ENCODE measurements at regions of chr9 and their contacts with region 1.

Region 1: GRCh38 chr9:127916665-127917613 is at the start of gene ST6GALNAC4:
- DNase-seq: peak; percentile 90 to 98 (median 95)
- ATAC-seq: peak; percentile 94
- H3K4me3 ChIP-seq: peak within 1 kb of the TSS; percentile 70 to 89
- H3K4me3 Mint-ChIP-seq: peak within 1 kb of the TSS; percentile 89
- H3K27ac ChIP-seq: peak within 1 kb of the TSS; percentile 62 to 72
- H3K27ac Mint-ChIP-seq: peak within 1 kb of the TSS; percentile 92
- H3K4me1 ChIP-seq: peaks cover 46% of the 10 kb centered on the region
- H3K4me1 Mint-ChIP-seq: peaks cover 54% of the 10 kb centered on the region
- H3K27me3 ChIP-seq: peaks cover 0 to 3% of the 10 kb centered on the region in 2 experiments
- H3K27me3 Mint-ChIP-seq: no peaks in the 10 kb centered on the region
- CTCF ChIP-seq: no peak
- total RNA-seq, gene ST6GALNAC4: 40.0 to 47.6 TPM

Region 2: GRCh38 chr9:127214421-127215267 is 702.3 kb before region 1 on chr9:
- CTCF ChIA-PET with region 1: interaction called, 8 read pairs
- POLR2A ChIA-PET with region 1: no interaction called
- intact Hi-C with region 1: loop called in 1 of 2 experiments (anchors 1 kb)
- DNase-seq: peak; percentile 36 to 73 (median 64)
- ATAC-seq: peak; percentile 93
- H3K4me3 ChIP-seq: no peak overlapping the region
- H3K4me3 Mint-ChIP-seq: no peak overlapping the region
- H3K27ac ChIP-seq: no peak overlapping the region
- H3K27ac Mint-ChIP-seq: no peak overlapping the region
- H3K4me1 ChIP-seq: no peaks in the 10 kb centered on the region
- H3K4me1 Mint-ChIP-seq: peaks cover 3% of the 10 kb centered on the region
- H3K27me3 ChIP-seq: no peaks in the 10 kb centered on the region
- H3K27me3 Mint-ChIP-seq: peaks cover 8% of the 10 kb centered on the region
- CTCF ChIP-seq: peak; percentile 69

Region 3: DNA sequence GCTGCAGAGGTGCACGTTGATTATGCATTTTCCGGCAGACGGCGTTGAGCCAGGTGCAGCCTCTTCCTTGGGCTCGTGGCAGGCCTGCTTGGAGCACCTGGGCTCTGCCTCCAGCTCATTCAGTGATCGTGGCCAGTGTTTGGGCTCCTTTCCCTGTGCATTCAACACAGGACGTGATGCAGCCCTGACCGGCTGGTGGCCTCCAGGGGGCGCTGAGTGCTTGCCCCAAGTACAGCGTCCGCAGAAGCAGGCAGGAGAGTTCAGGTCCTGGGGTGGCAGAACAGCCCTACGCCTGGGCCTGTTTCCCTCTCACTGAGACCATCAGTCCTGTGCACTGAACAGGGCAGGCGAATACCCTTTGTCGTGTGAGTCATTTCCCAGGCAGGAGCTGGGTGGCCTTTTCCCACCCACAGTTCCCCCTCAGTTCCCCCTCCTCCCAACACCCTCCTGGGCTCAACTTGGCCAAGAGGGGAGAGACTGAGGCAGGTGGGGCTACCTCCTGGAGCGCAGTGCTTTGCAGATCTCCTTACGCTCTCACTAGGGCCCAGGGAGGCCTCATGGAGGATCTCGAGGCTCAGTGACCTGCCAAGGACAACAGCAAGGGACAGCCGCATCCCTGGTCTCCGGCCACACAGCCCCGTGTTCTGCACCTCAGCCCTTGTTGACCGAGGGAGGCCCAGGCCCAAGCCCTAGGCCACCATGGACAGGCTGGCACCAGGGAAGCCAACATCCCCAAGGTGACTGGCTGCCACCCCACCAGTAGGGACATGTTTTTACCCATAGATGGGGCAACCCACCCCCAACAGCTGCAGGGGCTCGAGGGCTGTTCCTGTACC is 412.8 kb before region 1 on chr9:
- CTCF ChIA-PET with region 1: interaction called, 20 read pairs
- POLR2A ChIA-PET with region 1: no interaction called
- intact Hi-C with region 1: loop called (anchors 1 to 5 kb)
- DNase-seq: peak; percentile 57 to 89 (median 82)
- ATAC-seq: peak; percentile 93
- H3K4me3 ChIP-seq: no peak overlapping the region
- H3K4me3 Mint-ChIP-seq: no peak overlapping the region
- H3K27ac ChIP-seq: no peak overlapping the region
- H3K27ac Mint-ChIP-seq: no peak overlapping the region
- H3K4me1 ChIP-seq: no peaks in the 10 kb centered on the region
- H3K4me1 Mint-ChIP-seq: no peaks in the 10 kb centered on the region
- H3K27me3 ChIP-seq: no peaks in the 10 kb centered on the region
- H3K27me3 Mint-ChIP-seq: no peaks in the 10 kb centered on the region
- CTCF ChIP-seq: peak; percentile 66

Region 4: GRCh38 chr9:127715394-127716337 is 201.3 kb before region 1 on chr9 and contains the starts of genes PTRH1 and TTC16:
- CTCF ChIA-PET with region 1: interaction called, 3 read pairs
- POLR2A ChIA-PET with region 1: no interaction called
- intact Hi-C with region 1: loop called in 1 of 2 experiments (anchors 1 kb)
- DNase-seq: peak; percentile 88 to 98 (median 97)
- ATAC-seq: peak; percentile 93
- H3K4me3 ChIP-seq: peak within 1 kb of the TSS; percentile 88 to 96
- H3K4me3 Mint-ChIP-seq: peak within 1 kb of the TSS; percentile 98
- H3K27ac ChIP-seq: peak within 1 kb of the TSS; percentile 80 to 83
- H3K27ac Mint-ChIP-seq: peak within 1 kb of the TSS; percentile 96
- H3K4me1 ChIP-seq: peaks cover 47% of the 10 kb centered on the region
- H3K4me1 Mint-ChIP-seq: peaks cover 44% of the 10 kb centered on the region
- H3K27me3 ChIP-seq: no peaks in the 10 kb centered on the region
- H3K27me3 Mint-ChIP-seq: no peaks in the 10 kb centered on the region
- CTCF ChIP-seq: no peak
- total RNA-seq, gene PTRH1: 4.6 to 5.3 TPM
- total RNA-seq, gene TTC16: 5.2 to 5.5 TPM

Region 5: DNA sequence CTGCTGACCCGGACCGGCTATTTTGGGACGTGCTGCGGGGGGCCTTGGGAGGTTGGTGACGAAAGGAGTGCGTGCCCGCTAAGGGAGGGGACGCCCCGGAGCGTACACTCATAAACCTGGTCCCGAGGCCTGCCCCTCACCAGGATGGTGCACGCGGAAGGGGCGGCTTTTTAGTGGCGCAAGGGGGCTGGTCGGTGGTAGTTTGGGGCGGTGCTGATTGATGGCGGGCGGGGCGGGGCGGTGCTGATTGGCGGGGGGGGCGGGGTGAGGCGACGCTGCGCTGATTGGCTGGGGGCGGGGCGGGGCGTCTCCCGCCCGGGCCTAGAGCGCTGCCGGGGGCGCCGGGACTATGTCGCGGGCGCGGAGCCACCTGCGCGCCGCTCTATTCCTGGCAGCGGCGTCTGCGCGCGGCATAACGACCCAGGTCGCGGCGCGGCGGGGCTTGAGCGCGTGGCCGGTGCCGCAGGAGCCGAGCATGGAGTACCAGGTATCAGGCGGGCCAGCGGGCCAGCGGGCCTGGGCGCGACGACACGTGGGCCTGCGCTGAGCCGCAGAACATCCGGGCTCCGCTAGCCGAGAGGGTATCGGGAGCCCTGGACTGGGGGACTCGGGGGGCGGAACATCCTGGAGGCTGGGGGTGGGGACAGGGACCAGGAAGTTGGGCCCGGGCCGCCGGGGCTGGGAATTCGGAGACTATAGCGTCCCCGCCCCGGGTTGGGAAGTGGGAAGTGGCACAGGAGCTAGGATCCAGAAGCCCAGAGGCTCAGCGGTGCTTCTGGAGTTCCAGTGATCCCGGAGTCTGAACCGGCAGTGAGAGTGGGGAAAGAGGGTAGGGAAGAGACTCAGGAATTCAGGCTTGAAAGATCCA is 114.1 kb before region 1 on chr9 and contains the start of gene FPGS:
- CTCF ChIA-PET with region 1: interaction called, 4 read pairs
- POLR2A ChIA-PET with region 1: no interaction called
- intact Hi-C with region 1: loop called (anchors 1 to 2 kb)
- DNase-seq: peak; percentile 57 to 92 (median 81)
- ATAC-seq: peak; percentile 87
- H3K4me3 ChIP-seq: peak within 1 kb of the TSS; percentile 95 to 98
- H3K4me3 Mint-ChIP-seq: peak within 1 kb of the TSS; percentile 92
- H3K27ac ChIP-seq: peak within 1 kb of the TSS; percentile 89
- H3K27ac Mint-ChIP-seq: peak within 1 kb of the TSS; percentile 87
- H3K4me1 ChIP-seq: peaks cover 21% of the 10 kb centered on the region
- H3K4me1 Mint-ChIP-seq: peaks cover 38% of the 10 kb centered on the region
- H3K27me3 ChIP-seq: no peaks in the 10 kb centered on the region
- H3K27me3 Mint-ChIP-seq: no peaks in the 10 kb centered on the region
- CTCF ChIP-seq: no peak
- total RNA-seq, gene FPGS: 91.9 to 95.3 TPM

Region 6: DNA sequence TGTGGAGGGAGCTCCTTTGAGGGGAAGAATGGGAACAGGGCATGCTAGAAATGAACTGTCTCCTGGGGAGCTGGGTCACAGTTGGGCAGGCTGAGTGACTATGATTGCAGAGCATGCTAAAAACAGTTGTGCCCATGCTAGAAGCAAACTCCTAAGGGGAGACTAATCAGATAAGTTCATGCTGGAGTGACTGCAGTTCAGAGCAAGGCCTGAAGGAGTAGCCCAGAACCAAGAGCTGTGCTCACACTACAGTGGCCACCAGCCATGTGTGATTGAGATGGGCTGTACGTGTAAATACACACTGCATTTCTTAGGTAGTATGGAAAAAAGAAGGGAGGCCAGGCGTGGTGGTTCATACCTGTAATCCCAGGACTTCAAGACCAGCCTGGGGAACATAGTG is 29.1 kb before region 1 on chr9:
- CTCF ChIA-PET with region 1: interaction called, 15 read pairs
- POLR2A ChIA-PET with region 1: interaction called, 3 read pairs
- intact Hi-C with region 1: loop called in 1 of 2 experiments (anchors 1 kb)
- DNase-seq: no peak
- ATAC-seq: peak; percentile 64
- H3K4me3 ChIP-seq: no peak overlapping the region
- H3K4me3 Mint-ChIP-seq: no peak overlapping the region
- H3K27ac ChIP-seq: no peak overlapping the region
- H3K27ac Mint-ChIP-seq: no peak overlapping the region
- H3K4me1 ChIP-seq: no peaks in the 10 kb centered on the region
- H3K4me1 Mint-ChIP-seq: peaks cover 5% of the 10 kb centered on the region
- H3K27me3 ChIP-seq: no peaks in the 10 kb centered on the region
- H3K27me3 Mint-ChIP-seq: no peaks in the 10 kb centered on the region
- CTCF ChIP-seq: no peak

Region 7: GRCh38 chr9:127937388-127938280 is 20.7 kb after region 1 on chr9 and contains the start of gene DPM2:
- CTCF ChIA-PET with region 1: interaction called, 10 read pairs
- POLR2A ChIA-PET with region 1: interaction called, 3 read pairs
- intact Hi-C with region 1: no loop called
- DNase-seq: peak; percentile 67 to 94 (median 87)
- ATAC-seq: peak; percentile 87
- H3K4me3 ChIP-seq: peak within 1 kb of the TSS; percentile 70 to 83
- H3K4me3 Mint-ChIP-seq: peak within 1 kb of the TSS; percentile 87
- H3K27ac ChIP-seq: peak within 1 kb of the TSS; percentile 55 to 84
- H3K27ac Mint-ChIP-seq: peak within 1 kb of the TSS; percentile 92
- H3K4me1 ChIP-seq: peaks cover 26% of the 10 kb centered on the region
- H3K4me1 Mint-ChIP-seq: peaks cover 44% of the 10 kb centered on the region
- H3K27me3 ChIP-seq: no peaks in the 10 kb centered on the region
- H3K27me3 Mint-ChIP-seq: no peaks in the 10 kb centered on the region
- CTCF ChIP-seq: no peak
- total RNA-seq, gene DPM2: 40.2 to 42.7 TPM

Region 8: GRCh38 chr9:128089299-128089698 is 172.4 kb after region 1 on chr9:
- CTCF ChIA-PET with region 1: no interaction called
- POLR2A ChIA-PET with region 1: no interaction called
- intact Hi-C with region 1: no loop called
- DNase-seq: no peak
- ATAC-seq: no peak
- H3K4me3 ChIP-seq: no peak overlapping the region
- H3K4me3 Mint-ChIP-seq: no peak overlapping the region
- H3K27ac ChIP-seq: no peak overlapping the region
- H3K27ac Mint-ChIP-seq: no peak overlapping the region
- H3K4me1 ChIP-seq: peaks cover 63% of the 10 kb centered on the region
- H3K4me1 Mint-ChIP-seq: peaks cover 63% of the 10 kb centered on the region
- H3K27me3 ChIP-seq: no peaks in the 10 kb centered on the region
- H3K27me3 Mint-ChIP-seq: no peaks in the 10 kb centered on the region
- CTCF ChIP-seq: no peak

Region 9: GRCh38 chr9:129811967-129812363 is 1895.0 kb after region 1 on chr9:
- CTCF ChIA-PET with region 1: no interaction called
- POLR2A ChIA-PET with region 1: no interaction called
- intact Hi-C with region 1: no loop called
- DNase-seq: no peak
- ATAC-seq: no peak
- H3K4me3 ChIP-seq: no peak overlapping the region
- H3K4me3 Mint-ChIP-seq: no peak overlapping the region
- H3K27ac ChIP-seq: no peak overlapping the region
- H3K27ac Mint-ChIP-seq: no peak overlapping the region
- H3K4me1 ChIP-seq: no peaks in the 10 kb centered on the region
- H3K4me1 Mint-ChIP-seq: peaks cover 16% of the 10 kb centered on the region
- H3K27me3 ChIP-seq: no peaks in the 10 kb centered on the region
- H3K27me3 Mint-ChIP-seq: no peaks in the 10 kb centered on the region
- CTCF ChIP-seq: no peak